ENCODE measurements at regions of chr3 and their contacts with region 1.

Region 1: DNA sequence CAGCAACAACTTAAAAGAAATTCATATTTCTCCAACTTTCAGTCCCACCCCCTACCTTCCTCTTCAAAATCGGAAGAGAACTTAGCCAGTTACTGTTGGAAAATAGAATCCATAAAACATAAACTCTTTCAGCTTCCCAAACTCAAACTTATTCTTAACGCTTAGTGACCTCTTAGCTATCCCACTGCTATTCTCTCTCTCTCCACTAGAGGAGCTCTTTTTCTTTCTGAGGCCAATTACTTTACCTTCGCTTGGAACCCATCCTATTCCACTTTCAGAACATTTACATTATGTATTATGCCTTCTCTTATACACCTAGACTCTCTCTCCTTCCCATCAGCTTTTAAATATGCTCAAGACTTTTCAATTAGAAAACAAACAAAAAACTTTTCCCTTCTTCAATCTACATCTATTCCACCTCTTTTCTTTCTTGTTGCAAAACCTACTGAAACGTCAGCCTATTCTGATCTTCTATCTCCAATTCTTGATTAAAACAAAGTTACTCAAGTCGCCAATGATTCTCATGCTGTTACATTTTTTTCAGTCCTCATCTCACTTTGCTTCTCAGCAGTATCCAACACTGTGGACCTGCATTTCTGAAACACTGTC is 13.4 kb upstream of the GHSR start:
- DNase-seq: no peak
- H3K4me3 ChIP-seq: no peak overlapping the region
- H3K27ac ChIP-seq: no peak overlapping the region
- H3K4me1 ChIP-seq: peaks cover 7% of the 10 kb centered on the region
- H3K27me3 ChIP-seq: peaks cover 0 to 2% of the 10 kb centered on the region in 2 experiments
- CTCF ChIP-seq: peak; percentile 72 to 77
- POLR2A ChIP-seq: no peak

Region 2: GRCh38 chr3:172437713-172438112 is 23.9 kb before region 1 on chr3:
- CTCF ChIA-PET with region 1: interaction called, 11 read pairs
- POLR2A ChIA-PET with region 1: no interaction called
- dilution Hi-C with region 1: no loop called
- intact Hi-C with region 1: no loop called
- DNase-seq: no peak
- H3K4me3 ChIP-seq: no peak overlapping the region
- H3K27ac ChIP-seq: no peak overlapping the region
- H3K4me1 ChIP-seq: no peaks in the 10 kb centered on the region
- H3K27me3 ChIP-seq: peaks cover 8 to 11% of the 10 kb centered on the region in 2 experiments
- CTCF ChIP-seq: no peak
- POLR2A ChIP-seq: no peak

Region 3: DNA sequence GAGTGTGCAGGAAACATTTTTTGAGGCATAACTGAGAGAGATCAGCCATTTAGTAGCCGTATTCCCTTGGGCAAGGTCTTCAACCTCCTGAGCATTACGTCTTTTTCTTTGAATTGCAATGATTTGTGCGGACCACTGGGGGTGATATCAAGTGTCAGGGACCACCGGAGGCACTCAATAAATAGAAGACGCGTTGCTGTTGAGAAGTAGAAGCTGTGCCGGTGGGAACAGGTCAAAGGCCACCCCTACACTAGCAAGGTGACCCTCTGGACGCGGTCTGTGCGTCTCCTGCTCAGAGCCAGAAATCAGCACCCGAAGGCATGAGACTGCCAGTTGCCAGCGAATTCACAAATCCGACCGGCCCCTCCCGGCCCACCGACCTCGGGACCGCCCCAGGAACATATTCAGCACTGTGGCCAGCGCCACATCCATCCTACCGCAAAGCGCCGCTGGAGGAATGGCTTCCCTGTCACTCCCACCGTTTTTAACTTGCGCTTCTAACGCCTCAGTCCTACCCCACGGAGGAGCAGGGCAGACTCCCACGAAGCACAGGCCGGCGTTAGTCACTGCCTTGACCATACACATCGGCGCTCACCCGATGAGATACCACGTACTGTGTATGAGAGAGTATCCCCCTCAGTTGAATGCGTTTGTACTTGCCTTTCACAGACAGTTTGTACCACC is 12.0 kb before region 1 on chr3:
- CTCF ChIA-PET with region 1: interaction called, 26 read pairs
- POLR2A ChIA-PET with region 1: no interaction called
- dilution Hi-C with region 1: no loop called
- intact Hi-C with region 1: no loop called
- DNase-seq: peak; percentile 46
- H3K4me3 ChIP-seq: no peak overlapping the region
- H3K27ac ChIP-seq: no peak overlapping the region
- H3K4me1 ChIP-seq: peaks cover 6% of the 10 kb centered on the region
- H3K27me3 ChIP-seq: peaks cover 39 to 63% of the 10 kb centered on the region in 2 experiments
- CTCF ChIP-seq: no peak
- POLR2A ChIP-seq: no peak

Region 4: DNA sequence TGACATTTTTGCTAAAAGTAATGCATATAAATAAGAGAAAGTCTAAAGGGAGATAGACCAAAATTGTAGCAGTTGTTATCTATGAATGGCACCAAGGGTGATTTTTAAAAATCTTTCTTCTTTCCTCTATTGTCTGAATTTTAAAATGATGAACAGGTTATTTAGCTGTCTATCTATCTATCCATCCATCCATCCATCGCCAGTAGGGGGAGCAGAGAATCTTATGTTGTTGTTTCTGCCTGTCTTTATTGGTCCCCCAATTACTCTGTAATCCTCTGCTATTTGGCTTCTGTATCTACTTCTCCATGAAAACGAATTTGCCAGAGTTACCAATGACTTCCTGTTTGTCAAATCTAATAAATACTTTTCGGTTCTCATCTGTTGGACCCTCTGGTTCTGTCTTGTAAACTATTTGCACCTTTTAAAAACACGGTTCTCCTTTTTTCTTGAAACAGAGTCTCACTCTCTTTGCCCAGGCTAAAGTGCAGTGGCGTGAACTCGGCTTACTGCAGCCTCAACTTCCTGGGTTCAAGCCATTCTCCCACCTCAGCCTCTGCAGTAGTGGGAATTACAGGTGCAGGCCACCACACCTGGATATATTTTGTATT is 374.9 kb after region 1 on chr3:
- CTCF ChIA-PET with region 1: no interaction called
- POLR2A ChIA-PET with region 1: no interaction called
- dilution Hi-C with region 1: no loop called
- intact Hi-C with region 1: no loop called
- DNase-seq: peak; percentile 65
- H3K4me3 ChIP-seq: no peak overlapping the region
- H3K27ac ChIP-seq: no peak overlapping the region
- H3K4me1 ChIP-seq: no peaks in the 10 kb centered on the region
- H3K27me3 ChIP-seq: no peaks in the 10 kb centered on the region
- CTCF ChIP-seq: peak; percentile 44 to 62
- POLR2A ChIP-seq: no peak